A549 (cell line): ENCODE measurements at regions of chr2 and their contacts with region 1.

Region 1: DNA sequence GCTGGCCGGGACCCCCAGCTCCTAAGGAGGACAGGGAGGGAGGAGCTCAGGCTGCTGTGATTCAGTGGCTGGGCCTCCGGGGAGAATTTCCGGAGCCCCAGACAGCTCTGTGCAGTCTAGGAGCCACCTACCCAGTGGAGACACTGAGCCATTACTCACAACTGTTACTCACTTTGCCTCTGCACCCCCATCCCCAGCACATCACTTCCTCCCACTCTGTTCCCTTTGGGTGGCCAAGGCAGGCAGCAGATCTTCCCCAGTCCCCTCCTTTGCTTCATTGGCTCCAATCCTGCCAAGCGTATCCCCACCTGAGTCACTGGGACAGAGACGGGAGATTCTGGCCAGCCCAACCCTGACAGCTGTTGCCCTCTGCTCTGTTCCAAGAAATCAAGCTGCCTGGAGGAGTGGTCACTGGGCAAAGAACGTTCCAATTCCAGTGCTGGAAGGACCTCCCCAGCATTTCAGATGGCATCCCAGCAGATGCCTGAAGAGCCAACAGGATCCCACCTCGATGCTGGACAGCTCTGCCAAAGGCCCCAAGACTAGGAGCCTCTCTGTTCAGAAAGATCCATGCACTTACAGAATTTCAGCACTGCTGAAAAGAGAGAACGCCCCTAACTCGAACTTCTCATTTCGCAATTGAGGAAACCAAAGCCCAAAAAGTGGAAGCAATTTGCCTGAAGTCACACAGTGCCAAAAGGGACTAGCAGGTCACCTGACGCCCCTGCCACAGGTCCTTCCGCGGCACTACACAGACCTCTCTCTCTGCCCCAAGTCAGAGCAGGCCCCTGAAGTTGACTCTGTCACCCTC is 68.3 kb downstream of the TNS1 start:
- DNase-seq: peak; percentile 55 to 73
- ATAC-seq: peak; percentile 90
- H3K4me3 ChIP-seq: no peak overlapping the region
- H3K27ac ChIP-seq: peak overlapping the region; percentile 88 to 90
- H3K4me1 ChIP-seq: peaks cover 78% of the 10 kb centered on the region
- CTCF ChIP-seq: no peak
- EP300 ChIP-seq: peak; percentile 44 to 74; a peak in 3 of 5 replicates
- POLR2A ChIP-seq: no peak
- RAD21 ChIP-seq: peak in 1 of 2 experiments; percentile 26; a peak in 1 of 5 replicates

Region 2: DNA sequence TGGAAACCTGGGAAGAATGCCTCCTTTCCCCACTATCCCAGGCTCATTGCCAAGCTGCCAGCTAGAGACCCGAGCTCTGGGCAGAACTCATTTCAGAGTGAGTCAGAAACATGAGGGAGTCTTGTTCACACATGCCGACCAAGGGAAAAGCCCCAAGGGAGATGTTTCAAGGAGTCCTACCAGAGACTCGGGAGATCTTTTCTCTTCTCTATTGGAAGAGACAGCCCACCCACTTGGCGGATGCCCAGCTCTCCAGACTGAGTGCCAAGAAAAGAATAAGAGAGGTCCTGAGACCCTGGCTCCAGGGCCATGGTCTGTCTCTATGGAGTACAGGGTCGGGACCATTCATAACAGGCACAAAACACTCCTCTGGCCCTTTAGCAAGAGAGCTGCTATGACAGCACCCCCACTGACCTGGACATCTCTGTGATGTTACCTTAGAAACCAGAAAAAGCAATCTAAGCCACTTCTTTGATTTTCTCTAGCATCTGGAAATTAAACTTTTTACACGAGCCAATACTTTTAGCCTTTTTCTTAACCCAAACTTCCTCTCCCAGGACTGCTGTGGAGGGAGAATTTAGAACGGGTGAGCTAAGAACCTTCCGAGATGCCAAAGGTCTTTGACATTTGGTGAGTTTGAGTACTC is 1220.7 kb before region 1 on chr2:
- CTCF ChIA-PET with region 1: no interaction called
- POLR2A ChIA-PET with region 1: no interaction called
- DNase-seq: peak; percentile 15 to 41
- ATAC-seq: peak; percentile 75 to 81
- H3K4me3 ChIP-seq: no peak overlapping the region
- H3K27ac ChIP-seq: 0 out of 6 replicates have a peak overlapping the region, but pooled peaks of 1 of the 2 experiments have one; percentile 45
- H3K4me1 ChIP-seq: peaks cover 9% of the 10 kb centered on the region
- CTCF ChIP-seq: no peak
- EP300 ChIP-seq: no peak
- POLR2A ChIP-seq: no peak
- RAD21 ChIP-seq: no peak

Region 3: GRCh38 chr2:217822296-217823252 is 112.0 kb before region 1 on chr2:
- CTCF ChIA-PET with region 1: no interaction called
- POLR2A ChIA-PET with region 1: no interaction called
- DNase-seq: no peak
- ATAC-seq: peak in 1 of 2 experiments; percentile 45; a peak in 3 of 6 replicates
- H3K4me3 ChIP-seq: no peak overlapping the region
- H3K27ac ChIP-seq: no peak overlapping the region
- H3K4me1 ChIP-seq: no peaks in the 10 kb centered on the region
- CTCF ChIP-seq: no peak
- EP300 ChIP-seq: no peak
- POLR2A ChIP-seq: no peak
- RAD21 ChIP-seq: no peak

Region 4: DNA sequence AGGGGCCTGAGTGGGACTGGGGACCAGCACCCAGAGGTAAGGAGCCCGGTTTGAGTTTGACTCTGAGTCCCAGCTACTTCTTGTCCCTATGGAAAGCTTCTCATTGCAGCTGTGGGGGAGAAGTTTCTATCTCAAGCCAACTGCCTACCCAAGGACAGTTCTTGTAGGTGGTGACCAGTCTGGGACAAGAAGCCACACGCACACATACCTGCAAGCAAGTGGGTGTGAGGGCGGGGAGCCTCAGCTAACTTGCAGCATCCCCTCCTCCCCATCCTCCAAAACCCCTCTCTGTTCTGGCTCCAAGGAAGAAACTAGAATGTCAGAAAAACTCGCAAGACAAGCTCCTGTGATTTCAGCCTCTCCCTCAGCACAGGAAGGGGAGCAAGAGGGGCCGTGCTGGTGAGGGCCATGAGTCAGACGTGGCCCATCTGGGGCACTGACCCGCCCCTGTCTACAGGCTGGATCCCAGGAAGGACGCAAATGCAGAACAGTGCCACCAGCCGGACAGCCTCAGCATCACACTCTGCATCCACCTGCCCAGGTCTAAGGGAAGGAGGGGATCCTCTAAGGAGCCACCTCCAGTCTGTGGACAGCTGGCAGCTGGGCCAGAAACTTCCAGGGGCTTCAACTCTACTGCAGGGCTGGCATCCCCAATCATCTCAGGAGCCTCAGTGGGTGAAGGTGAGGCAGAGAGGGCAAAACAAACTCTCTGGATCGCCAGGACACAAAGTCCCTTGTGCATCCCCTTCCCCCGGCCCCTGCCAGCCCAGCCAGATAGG is 35.1 kb before region 1 on chr2:
- CTCF ChIA-PET with region 1: interaction called, 23 read pairs
- POLR2A ChIA-PET with region 1: no interaction called
- DNase-seq: peak; percentile 77 to 86
- ATAC-seq: peak; percentile 63 to 81
- H3K4me3 ChIP-seq: no peak overlapping the region
- H3K27ac ChIP-seq: peak overlapping the region; percentile 86 to 89
- H3K4me1 ChIP-seq: peaks cover 56% of the 10 kb centered on the region
- CTCF ChIP-seq: peak; percentile 63
- EP300 ChIP-seq: no peak
- POLR2A ChIP-seq: no peak
- RAD21 ChIP-seq: peak; percentile 32 to 43; a peak in 4 of 5 replicates

Region 5: GRCh38 chr2:217918308-217919024 is 16.1 kb before region 1 on chr2:
- CTCF ChIA-PET with region 1: interaction called, 14 read pairs
- POLR2A ChIA-PET with region 1: no interaction called
- DNase-seq: peak in 1 of 2 experiments; percentile 31
- ATAC-seq: peak in 1 of 2 experiments; percentile 56; a peak in 3 of 6 replicates
- H3K4me3 ChIP-seq: no peak overlapping the region
- H3K27ac ChIP-seq: peak overlapping the region; percentile 61 to 85
- H3K4me1 ChIP-seq: peaks cover 77% of the 10 kb centered on the region
- CTCF ChIP-seq: no peak
- EP300 ChIP-seq: no peak
- POLR2A ChIP-seq: no peak
- RAD21 ChIP-seq: no peak

Region 6: DNA sequence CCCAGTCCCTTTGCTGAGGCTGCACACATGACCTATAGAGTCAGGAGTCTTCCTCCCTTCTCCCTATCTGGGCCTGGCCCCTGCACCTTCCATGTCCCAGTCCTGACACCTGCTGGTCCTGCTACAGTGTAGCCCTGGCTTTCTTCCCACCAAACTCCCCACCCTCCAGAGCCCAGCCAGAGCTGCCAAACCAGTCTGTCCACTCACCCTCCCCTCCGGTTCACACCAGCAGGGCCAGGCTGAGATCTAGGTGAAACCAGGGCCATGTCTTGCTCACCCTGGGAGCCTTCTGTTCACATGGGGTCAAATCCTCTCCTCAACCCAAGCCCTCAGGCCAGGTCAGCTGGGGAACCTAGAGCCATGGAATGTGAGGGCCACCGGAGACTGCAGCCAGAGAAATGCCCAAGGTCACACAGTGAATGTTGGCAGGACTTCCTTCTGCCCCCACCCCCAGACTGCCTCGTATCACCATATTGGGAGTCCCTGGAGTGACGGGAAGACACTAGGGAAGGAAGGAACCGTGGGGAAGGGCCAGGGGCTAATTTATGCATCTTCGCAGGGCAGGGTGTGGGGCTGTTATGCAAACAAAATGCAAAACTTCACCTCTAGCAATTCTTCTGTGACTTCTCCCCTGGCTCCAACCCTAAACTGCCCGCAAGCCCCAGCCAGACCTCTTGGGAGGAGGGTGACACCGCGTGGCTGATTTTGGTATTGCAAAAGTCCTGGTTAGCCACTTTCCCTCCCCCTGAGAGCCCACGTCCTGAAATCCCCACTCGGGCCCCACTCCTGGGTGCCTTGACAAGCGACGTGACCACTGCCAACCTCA is 53.7 kb after region 1 on chr2:
- CTCF ChIA-PET with region 1: interaction called, 15 read pairs
- POLR2A ChIA-PET with region 1: no interaction called
- DNase-seq: peak; percentile 56 to 61
- ATAC-seq: peak; percentile 56 to 86; a peak in 5 of 6 replicates
- H3K4me3 ChIP-seq: no peak overlapping the region
- H3K27ac ChIP-seq: peak overlapping the region; percentile 55 to 71
- H3K4me1 ChIP-seq: peaks cover 24% of the 10 kb centered on the region
- CTCF ChIP-seq: peak; percentile 90
- EP300 ChIP-seq: no peak
- POLR2A ChIP-seq: no peak
- RAD21 ChIP-seq: peak; percentile 91 to 93

Region 7: GRCh38 chr2:217993817-217994463 is 59.4 kb after region 1 on chr2:
- CTCF ChIA-PET with region 1: interaction called, 10 read pairs
- POLR2A ChIA-PET with region 1: no interaction called
- DNase-seq: peak; percentile 33 to 70
- ATAC-seq: peak; percentile 57 to 87
- H3K4me3 ChIP-seq: peak overlapping the region; percentile 16; the same call in 1 of the 3 replicates
- H3K27ac ChIP-seq: peak overlapping the region; percentile 80 to 86
- H3K4me1 ChIP-seq: peaks cover 54% of the 10 kb centered on the region
- CTCF ChIP-seq: peak; percentile 69
- EP300 ChIP-seq: no peak
- POLR2A ChIP-seq: no peak
- RAD21 ChIP-seq: peak; percentile 32 to 42; a peak in 3 of 5 replicates

Region 8: DNA sequence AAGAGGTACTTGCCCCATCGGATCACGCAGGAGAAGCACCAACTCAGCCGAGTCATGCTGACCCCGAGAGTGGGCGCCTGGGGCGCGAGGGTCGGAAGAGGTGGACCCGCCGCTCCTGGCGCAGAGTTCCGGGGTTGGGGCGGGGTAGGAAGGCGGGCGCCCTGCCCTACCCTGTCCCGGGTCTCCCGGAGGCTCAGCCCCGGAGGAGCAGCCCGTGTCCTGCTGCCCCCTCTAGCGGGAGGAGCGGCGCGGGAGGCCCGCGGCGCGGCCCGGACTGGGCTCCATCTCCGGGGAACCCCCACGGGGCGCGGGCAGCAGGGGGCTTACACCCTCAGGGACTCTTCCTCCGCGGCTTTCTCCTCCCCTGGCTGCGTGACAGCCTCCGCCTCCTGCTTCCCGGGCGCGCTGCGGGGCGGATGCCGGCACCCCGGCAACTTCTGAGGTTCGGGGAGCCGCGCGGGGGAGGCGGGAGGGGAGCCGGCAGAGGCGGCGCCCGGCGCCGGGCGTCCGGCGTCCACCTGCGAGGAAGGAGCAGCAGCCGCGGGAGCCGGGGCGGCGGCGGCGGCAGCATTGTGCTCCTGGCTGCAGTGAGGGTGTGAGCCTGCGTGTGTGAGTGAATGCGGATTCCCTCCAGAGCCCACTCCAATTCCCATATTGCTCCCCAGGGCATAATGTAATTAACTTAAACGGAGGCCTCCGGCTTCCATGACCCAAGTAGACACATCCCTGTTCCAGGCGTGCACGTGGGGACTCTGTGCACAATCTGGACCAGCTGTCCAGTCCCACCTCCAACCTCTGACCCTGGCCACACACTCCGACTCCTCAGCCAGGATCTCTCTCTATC is 75.8 kb after region 1 on chr2:
- CTCF ChIA-PET with region 1: interaction called, 10 read pairs
- POLR2A ChIA-PET with region 1: no interaction called
- DNase-seq: peak; percentile 25 to 90
- ATAC-seq: peak; percentile 84 to 91
- H3K4me3 ChIP-seq: peak overlapping the region; percentile 61
- H3K27ac ChIP-seq: peak overlapping the region; percentile 79 to 91
- H3K4me1 ChIP-seq: peaks cover 33% of the 10 kb centered on the region
- CTCF ChIP-seq: peak; percentile 58
- EP300 ChIP-seq: no peak
- POLR2A ChIP-seq: no peak
- RAD21 ChIP-seq: peak in 1 of 2 experiments; percentile 65; a peak in 3 of 5 replicates